Tibial artery (tissue), 4 donors: ENCODE measurements at regions of chr2 and their contacts with region 1.

Region 1: DNA sequence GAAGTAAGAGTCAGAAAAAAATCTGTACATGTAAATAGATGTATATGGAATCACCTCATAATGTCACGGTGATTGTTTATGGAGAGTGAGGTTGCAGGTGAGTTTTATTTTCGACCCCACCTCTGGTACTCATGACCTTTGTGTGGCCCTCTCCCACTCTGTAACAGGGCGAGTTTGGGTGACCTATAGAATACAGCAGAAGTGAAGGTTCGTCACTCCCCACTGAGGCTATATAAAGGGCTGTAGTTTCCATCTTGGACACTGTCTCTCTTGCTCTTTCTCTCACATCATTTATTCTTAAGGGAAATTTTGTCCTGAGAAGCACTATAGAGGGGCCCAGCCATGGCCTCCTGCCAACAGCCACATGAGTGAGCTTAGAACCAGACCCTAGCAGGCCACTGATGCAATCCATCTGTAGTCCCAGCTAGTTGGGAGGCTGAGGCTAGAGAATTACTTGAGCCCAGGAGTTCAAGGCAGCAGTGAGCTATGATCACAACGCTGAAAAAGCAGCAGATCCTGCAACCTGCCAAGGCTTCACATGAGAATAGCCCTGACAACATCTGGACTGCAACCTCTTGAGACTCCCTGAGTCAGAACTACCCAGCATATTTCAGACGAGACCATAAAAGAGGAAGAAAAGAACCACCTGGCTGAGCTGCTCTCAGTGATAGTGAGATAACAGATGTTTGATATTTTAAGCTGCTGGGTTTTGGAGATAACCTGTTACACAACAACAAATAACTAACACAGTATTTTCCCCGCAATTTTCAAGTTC is 74.3 kb upstream of the SLC1A4 start:
- DNase-seq: no peak
- H3K4me3 ChIP-seq: no peak overlapping the region
- H3K27ac ChIP-seq: no peak overlapping the region
- H3K4me1 ChIP-seq: no peaks in the 10 kb centered on the region
- H3K27me3 ChIP-seq: no peaks in the 10 kb centered on the region
- CTCF ChIP-seq: no peak

Region 2: GRCh38 chr2:65040400-65041261 is 125.7 kb after region 1 on chr2:
- intact Hi-C with region 1: loop called (anchors 2 kb)
- DNase-seq: peak; percentile 91 to 92
- H3K4me3 ChIP-seq: peak overlapping the region; percentile 9 to 24
- H3K27ac ChIP-seq: no peak overlapping the region
- H3K4me1 ChIP-seq: peaks cover 0 to 7% (median 4%) of the 10 kb centered on the region in 4 donors
- H3K27me3 ChIP-seq: no peaks in the 10 kb centered on the region
- CTCF ChIP-seq: peak; percentile 94 to 96

Region 3: GRCh38 chr2:65186872-65187851 is 272.2 kb after region 1 on chr2:
- intact Hi-C with region 1: loop called (anchors 5 kb)
- DNase-seq: peak; percentile 71 to 88
- H3K4me3 ChIP-seq: no peak overlapping the region
- H3K27ac ChIP-seq: no peak overlapping the region
- H3K4me1 ChIP-seq: peaks cover 0 to 8% (median 3%) of the 10 kb centered on the region in 4 donors
- H3K27me3 ChIP-seq: no peaks in the 10 kb centered on the region
- CTCF ChIP-seq: peak; percentile 80 to 83

Region 4: DNA sequence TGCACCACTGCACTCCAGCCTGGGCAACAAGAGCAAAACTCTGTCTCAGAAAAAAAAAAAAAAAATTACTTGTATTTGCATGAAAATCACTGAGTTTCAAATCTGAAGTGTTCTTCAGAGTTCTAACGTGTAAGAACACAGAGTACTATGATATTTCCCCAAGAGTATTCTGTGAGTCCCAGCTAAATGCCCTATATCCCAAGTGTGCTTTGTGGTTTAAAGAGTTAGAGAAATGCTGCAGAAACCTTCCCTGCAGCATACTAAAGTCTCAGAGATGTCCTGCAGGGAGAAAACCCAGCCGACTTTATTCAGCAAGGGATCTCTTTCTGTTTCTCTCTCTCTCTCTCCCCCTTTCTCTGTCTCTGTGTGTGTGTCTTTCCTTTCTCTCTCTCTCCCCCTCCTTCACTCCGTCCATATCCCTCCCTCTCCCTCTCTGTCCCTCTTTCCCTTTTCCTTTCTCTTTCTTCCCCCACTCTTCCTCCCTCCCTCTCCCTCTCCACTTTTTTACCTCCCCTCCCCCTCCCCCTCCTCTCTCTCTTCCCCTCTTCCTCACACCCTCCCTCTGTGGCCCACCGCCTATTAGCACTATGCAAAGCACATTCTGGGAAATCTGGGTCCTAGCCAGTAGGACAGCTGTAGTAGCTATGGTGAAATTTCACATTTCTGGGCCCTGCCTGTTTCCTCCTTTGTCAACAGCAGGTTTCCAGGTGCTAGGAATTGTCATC is 366.9 kb after region 1 on chr2:
- intact Hi-C with region 1: no loop called
- DNase-seq: no peak
- H3K4me3 ChIP-seq: no peak overlapping the region
- H3K27ac ChIP-seq: no peak overlapping the region
- H3K4me1 ChIP-seq: no peaks in the 10 kb centered on the region
- H3K27me3 ChIP-seq: no peaks in the 10 kb centered on the region
- CTCF ChIP-seq: no peak